IMR-90 (cell line): ENCODE measurements at regions of chr3 and their contacts with region 1.

Region 1: DNA sequence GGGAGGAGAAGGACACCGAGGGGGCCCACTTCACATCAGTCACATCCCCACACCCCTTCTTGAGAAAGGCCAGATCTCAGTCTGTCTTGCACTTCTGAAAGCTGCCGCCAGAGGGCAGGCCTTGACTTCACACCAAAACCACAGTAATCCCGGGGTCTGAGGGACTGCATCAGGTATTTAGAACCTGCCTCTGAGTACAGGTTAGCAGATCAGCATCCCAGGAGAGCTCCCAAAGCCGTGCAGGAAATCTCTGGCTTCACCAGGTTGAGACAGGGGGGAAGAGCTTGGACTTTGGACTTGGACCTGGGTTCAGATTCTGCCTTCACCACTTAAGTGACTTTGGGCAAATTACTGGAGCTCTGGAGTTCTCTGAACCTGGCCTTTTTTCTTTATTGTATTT is 50.3 kb downstream of the LHFPL4 start:
- DNase-seq: peak; percentile 61
- ATAC-seq: peak; percentile 59
- H3K4me3 ChIP-seq: no peak overlapping the region
- H3K27ac ChIP-seq: no peak overlapping the region
- H3K4me1 ChIP-seq: peaks cover 2% of the 10 kb centered on the region
- H3K27me3 ChIP-seq: peaks cover 10% of the 10 kb centered on the region; the same call in 1 of the 2 replicates
- CTCF ChIP-seq: peak; percentile 69
- POLR2A ChIP-seq: no peak
- RAD21 ChIP-seq: peak; percentile 62

Region 2: DNA sequence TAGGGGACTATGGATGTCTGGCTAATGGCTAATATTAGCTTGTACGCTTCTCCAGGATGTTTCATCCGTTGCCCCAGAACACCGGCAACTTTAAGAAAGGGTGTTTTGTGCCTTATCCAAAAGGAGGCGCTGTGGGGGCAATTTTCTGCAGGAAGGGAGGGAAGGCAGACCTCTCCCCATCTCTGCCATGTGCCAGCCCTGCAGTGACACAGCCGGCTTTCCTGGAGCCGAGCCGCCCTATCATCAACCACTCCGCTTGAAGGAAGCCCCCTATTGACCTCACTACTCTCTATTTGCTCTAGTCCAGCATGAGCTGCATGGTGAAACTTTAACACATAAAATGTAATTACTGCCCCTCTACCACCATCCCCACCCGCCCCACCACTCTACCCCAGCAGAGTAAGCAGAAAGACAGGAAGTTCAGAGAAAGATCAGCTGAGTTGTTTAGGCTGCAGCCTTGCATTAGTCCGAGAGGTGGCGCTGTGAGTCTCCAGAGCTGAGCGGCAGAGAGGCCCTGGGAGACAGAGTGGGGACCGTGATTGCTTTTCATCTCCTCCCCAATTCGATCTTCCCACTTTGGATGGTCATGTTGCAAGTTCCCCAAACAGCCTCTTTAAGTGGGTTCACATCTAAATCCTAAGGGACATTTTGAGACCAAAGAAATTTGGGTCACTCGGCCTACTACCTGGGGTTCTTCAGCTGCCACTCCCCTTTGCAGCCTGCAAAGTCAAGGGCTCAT is 515.5 kb before region 1 on chr3:
- CTCF ChIA-PET with region 1: no interaction called
- POLR2A ChIA-PET with region 1: interaction called, 10 read pairs
- dilution Hi-C with region 1: no loop called
- in situ Hi-C with region 1: no loop called
- intact Hi-C with region 1: no loop called
- DNase-seq: peak; percentile 40
- ATAC-seq: peak; percentile 83
- H3K4me3 ChIP-seq: no peak overlapping the region
- H3K27ac ChIP-seq: no peak overlapping the region
- H3K4me1 ChIP-seq: no peaks in the 10 kb centered on the region
- H3K27me3 ChIP-seq: peaks cover 4% of the 10 kb centered on the region
- CTCF ChIP-seq: peak; percentile 65
- POLR2A ChIP-seq: no peak
- RAD21 ChIP-seq: peak; percentile 55

Region 3: DNA sequence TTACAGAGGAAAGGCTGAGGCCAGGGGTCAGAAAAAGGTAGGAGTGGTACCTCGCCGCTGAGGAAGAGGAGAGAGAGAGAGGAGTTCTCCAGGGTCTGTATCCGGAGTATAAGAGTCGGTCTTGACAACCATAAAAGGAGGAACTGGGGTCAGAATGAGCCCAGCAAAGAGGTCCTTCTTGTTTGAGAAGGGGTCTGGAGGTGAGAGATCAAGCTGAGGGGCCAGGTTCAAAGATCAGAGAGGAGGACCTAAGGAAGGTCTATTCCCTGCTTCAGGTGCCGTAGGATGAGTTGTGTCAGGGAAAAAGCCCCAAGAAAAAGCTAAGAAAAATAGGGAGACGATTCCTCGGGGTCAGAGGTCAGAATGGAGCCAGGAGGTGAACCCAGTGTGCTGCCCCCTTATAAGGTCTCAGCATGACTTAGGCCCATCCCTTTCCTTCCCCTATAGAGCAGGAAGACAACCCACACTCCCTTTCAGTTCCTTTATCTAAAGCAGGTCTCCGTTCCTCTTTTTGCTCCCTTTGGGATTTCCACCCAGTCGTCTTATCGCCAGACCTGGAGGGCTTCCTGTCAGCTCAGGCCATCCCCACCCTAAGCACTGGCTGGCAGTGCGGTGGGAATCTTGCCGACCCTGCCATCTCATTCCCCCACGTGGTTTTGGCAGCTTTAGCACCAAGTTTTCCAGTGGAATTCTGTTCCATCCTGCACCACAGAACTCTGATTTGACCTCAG is 146.7 kb after region 1 on chr3:
- CTCF ChIA-PET with region 1: no interaction called
- POLR2A ChIA-PET with region 1: no interaction called
- dilution Hi-C with region 1: no loop called
- in situ Hi-C with region 1: no loop called
- intact Hi-C with region 1: loop called (anchors 1 kb)
- DNase-seq: no peak
- ATAC-seq: no peak; the same call in 1 of the 2 replicates
- H3K4me3 ChIP-seq: peak overlapping the region; percentile 99
- H3K27ac ChIP-seq: peak overlapping the region; percentile 52
- H3K4me1 ChIP-seq: peaks cover 4% of the 10 kb centered on the region
- H3K27me3 ChIP-seq: no peaks in the 10 kb centered on the region
- CTCF ChIP-seq: no peak
- POLR2A ChIP-seq: no peak
- RAD21 ChIP-seq: no peak